Right lobe of liver (tissue), 6 donors: ENCODE measurements at regions of chr5 and their contacts with region 1.

Region 1: GRCh38 chr5:153964880-153965645 is 73.6 kb downstream of the FAM114A2 start:
- DNase-seq: peak in 1 of 3 donors; percentile 35
- ATAC-seq: peak; percentile 86 to 89 (median 88)
- H3K4me3 ChIP-seq: no peak overlapping the region
- H3K27ac ChIP-seq: no peak overlapping the region
- H3K4me1 ChIP-seq: no peaks in the 10 kb centered on the region
- H3K27me3 ChIP-seq: no peaks in the 10 kb centered on the region
- CTCF ChIP-seq: peak; percentile 78 to 86 (median 82)
- POLR2A ChIP-seq: no peak

Region 2: DNA sequence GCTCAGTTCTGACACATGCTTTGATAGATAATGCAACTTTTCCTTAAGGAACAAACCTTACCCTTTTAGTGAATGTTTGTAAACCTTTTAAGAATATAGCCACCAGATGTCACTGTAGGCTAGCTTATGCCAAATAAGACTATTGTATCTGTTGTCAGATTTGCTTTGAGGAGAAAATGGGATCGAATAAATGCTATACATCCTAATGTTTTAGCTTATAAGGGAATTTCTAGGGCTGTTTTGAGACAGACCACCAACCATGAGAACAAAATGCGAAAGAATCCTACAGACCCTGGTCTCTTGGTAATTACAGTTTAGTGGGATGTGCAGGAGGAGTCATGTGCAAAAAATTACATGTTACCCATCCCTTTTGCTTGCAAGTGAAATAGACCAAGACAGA is 1432.3 kb before region 1 on chr5:
- intact Hi-C with region 1: loop called in 1 of 2 experiments (anchors 10 kb)
- DNase-seq: no peak
- ATAC-seq: peak; percentile 69 to 80 (median 72)
- H3K4me3 ChIP-seq: no peak overlapping the region
- H3K27ac ChIP-seq: no peak overlapping the region
- H3K4me1 ChIP-seq: no peaks in the 10 kb centered on the region
- H3K27me3 ChIP-seq: no peaks in the 10 kb centered on the region
- CTCF ChIP-seq: peak; percentile 50 to 76 (median 57)
- POLR2A ChIP-seq: no peak

Region 3: DNA sequence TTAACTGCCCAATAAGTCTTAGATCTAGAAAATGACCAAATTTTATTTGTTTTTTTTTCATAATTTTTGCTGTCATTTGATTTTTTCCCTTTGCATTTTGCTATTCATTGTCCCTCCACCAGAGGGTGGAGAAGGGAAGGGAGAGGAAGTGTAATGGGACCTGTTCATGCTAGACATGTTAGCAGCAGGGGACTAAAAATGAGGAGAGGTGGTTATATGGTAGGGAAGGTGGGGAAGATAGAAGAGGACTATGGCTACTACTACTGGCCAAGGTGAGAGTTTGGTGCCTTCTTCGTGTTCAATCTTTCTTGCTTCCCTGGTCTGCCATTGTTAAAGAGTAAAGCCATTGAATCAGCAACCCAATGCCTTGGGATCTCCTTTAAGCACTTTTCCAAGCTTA is 468.2 kb before region 1 on chr5:
- intact Hi-C with region 1: loop called in 1 of 2 experiments (anchors 10 kb)
- DNase-seq: no peak
- ATAC-seq: peak in 3 of 4 donors; percentile 57 to 65 (median 64)
- H3K4me3 ChIP-seq: no peak overlapping the region
- H3K27ac ChIP-seq: no peak overlapping the region
- H3K4me1 ChIP-seq: no peaks in the 10 kb centered on the region
- H3K27me3 ChIP-seq: no peaks in the 10 kb centered on the region
- CTCF ChIP-seq: peak; percentile 54 to 67 (median 60)
- POLR2A ChIP-seq: no peak

Region 4: DNA sequence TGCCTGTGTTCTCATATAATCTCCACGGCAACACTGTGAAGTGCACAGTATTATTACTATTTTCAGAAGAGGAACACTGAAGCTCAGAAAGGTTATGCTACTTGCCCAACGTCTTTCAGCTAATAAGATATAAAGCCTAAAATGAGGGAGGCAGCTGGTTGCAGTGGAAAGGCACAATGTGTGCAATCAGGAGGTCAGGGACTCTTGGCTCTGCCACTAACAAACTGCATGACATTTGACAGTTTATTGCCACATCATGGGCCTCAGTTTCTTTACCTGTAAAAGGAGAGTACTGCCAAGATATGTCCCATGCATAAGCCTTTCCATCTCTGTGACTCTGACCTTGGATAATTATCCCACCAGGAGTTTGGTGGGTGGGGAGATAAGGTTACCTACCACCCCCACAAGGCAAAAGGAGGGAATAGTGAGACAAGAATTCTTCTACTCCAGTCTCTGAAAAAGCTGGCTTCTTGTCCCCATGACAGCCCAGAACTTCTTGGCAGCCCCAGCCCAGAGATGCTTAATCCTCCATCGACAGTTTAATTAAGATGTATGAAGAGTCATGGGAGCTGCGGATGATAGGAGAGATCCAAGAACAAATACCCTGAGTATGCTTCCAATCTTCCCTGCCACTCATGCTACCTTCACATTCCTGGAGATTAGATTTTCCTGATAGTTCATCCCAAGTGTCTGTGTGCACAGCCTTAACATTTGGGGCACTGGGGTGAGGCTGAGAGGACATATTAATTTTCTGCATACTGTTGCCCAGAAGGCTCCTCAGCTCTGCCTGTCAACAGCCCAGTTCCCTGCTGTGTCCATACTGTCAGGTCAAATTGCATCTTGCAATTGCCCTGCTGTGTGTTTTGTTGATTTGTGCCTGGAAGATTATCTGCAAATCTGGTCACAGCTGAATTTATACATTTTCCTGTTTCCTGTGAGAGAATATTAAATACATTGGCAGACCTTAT is 197.6 kb before region 1 on chr5:
- intact Hi-C with region 1: no loop called
- DNase-seq: no peak
- ATAC-seq: no peak
- H3K4me3 ChIP-seq: no peak overlapping the region
- H3K27ac ChIP-seq: no peak overlapping the region
- H3K4me1 ChIP-seq: no peaks in the 10 kb centered on the region
- H3K27me3 ChIP-seq: no peaks in the 10 kb centered on the region
- CTCF ChIP-seq: no peak
- POLR2A ChIP-seq: no peak

Region 5: GRCh38 chr5:154141745-154142221 is 176.7 kb after region 1 on chr5:
- intact Hi-C with region 1: no loop called
- DNase-seq: no peak
- ATAC-seq: no peak
- H3K4me3 ChIP-seq: no peak overlapping the region
- H3K27ac ChIP-seq: no peak overlapping the region
- H3K4me1 ChIP-seq: no peaks in the 10 kb centered on the region
- H3K27me3 ChIP-seq: no peaks in the 10 kb centered on the region
- CTCF ChIP-seq: no peak
- POLR2A ChIP-seq: no peak

Region 6: DNA sequence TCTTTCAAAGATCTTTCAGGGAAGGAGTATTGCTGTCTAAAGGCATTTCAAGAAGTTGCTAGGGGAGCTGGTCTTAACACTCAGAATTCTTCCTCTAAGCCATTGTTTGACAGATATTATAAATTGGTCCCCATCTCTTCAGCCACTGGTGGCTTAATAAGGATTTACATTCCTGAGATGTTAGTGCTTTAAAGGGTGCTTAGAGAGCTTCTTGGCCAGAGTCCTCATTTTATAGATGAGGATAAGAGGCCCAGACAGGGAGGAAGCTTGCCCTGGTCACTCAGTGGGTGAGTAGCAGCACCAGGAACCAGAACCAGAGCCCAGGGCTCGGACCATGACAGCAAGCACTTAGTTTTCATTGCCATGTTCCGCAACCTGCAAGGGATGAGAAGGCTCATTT is 278.7 kb after region 1 on chr5:
- intact Hi-C with region 1: no loop called
- DNase-seq: no peak
- ATAC-seq: no peak
- H3K4me3 ChIP-seq: no peak overlapping the region
- H3K27ac ChIP-seq: no peak overlapping the region
- H3K4me1 ChIP-seq: no peaks in the 10 kb centered on the region
- H3K27me3 ChIP-seq: no peaks in the 10 kb centered on the region
- CTCF ChIP-seq: no peak
- POLR2A ChIP-seq: no peak